HEK293T (cell line): ENCODE measurements at regions of chr2 and their contacts with region 1.

Region 1: GRCh38 chr2:74845217-74846011 is 11.5 kb downstream of the HK2 start:
- DNase-seq: no peak

Region 2: GRCh38 chr2:74834792-74835752 is 10.3 kb before region 1 on chr2:
- CTCF ChIA-PET with region 1: interaction called, 3 read pairs
- POLR2A ChIA-PET with region 1: interaction called, 12 read pairs
- DNase-seq: peak; percentile 49